Calu3 (cell line): ENCODE measurements at regions of chr1 and their contacts with region 1.

Region 1: GRCh38 chr1:48093696-48094528 is 96.7 kb upstream of the TRABD2B start:
- DNase-seq: peak; percentile 94
- H3K4me3 Mint-ChIP-seq: peak overlapping the region; percentile 78
- H3K27ac Mint-ChIP-seq: peak overlapping the region; percentile 67
- H3K4me1 Mint-ChIP-seq: peaks cover 14% of the 10 kb centered on the region
- H3K27me3 Mint-ChIP-seq: peaks cover 65% of the 10 kb centered on the region
- CTCF ChIP-seq: peak; percentile 95

Region 2: GRCh38 chr1:48236716-48237470 is 143.0 kb after region 1 on chr1:
- CTCF ChIA-PET with region 1: no interaction called
- intact Hi-C with region 1: loop called (anchors 2 kb)
- DNase-seq: peak; percentile 12
- H3K4me3 Mint-ChIP-seq: no peak overlapping the region
- H3K27ac Mint-ChIP-seq: no peak overlapping the region
- H3K4me1 Mint-ChIP-seq: no peaks in the 10 kb centered on the region
- H3K27me3 Mint-ChIP-seq: peaks cover 10% of the 10 kb centered on the region
- CTCF ChIP-seq: peak; percentile 29

Region 3: DNA sequence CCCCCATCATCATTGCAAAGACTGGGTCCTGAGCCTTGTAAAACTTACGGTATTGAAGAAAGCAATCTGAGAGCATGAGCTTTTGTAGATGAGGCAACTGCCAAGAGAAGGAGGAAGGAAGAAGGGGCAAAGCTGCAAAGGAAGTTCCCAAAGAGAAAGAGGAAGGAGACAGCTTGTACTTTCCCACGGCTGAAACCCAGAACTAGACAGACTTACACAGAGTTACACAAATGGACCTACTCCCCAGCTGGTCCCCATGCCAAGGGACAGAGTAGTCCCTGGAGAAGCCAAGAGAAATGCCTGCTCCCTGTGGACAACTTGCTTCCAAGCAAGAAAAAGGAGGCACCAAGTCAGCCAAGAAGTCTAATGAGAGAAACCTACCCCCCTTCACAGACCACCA is 151.2 kb after region 1 on chr1:
- CTCF ChIA-PET with region 1: interaction called, 11 read pairs
- intact Hi-C with region 1: no loop called
- DNase-seq: no peak
- H3K4me3 Mint-ChIP-seq: no peak overlapping the region
- H3K27ac Mint-ChIP-seq: no peak overlapping the region
- H3K4me1 Mint-ChIP-seq: peaks cover 18% of the 10 kb centered on the region
- H3K27me3 Mint-ChIP-seq: no peaks in the 10 kb centered on the region
- CTCF ChIP-seq: no peak